ENCODE measurements at regions of chr14 and their contacts with region 1.

Region 1: DNA sequence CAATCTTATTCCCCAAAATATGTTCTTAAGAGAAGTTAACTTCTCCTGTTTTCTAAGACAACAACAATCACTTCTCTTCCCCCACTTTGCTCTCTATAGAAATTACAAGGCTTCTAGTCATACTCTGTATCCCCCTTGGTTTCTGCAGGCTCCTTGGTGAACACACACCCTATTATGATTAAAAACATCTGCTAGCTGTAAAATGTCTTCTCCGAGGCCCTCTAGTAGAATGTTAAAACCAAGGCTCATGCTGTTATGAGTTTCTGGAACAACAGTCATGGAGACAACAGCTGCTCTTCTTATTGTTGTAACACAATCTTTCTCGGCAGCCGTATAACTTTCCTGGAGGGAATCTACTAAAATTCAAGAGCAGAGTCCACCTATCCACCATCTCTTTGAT is 397.5 kb upstream of the CCDC196 start:
- DNase-seq: no peak
- H3K4me3 ChIP-seq: no peak overlapping the region
- H3K27ac ChIP-seq: no peak overlapping the region
- H3K4me1 ChIP-seq: no peaks in the 10 kb centered on the region
- H3K27me3 ChIP-seq: no peaks in the 10 kb centered on the region
- CTCF ChIP-seq: no peak

Region 2: GRCh38 chr14:65751510-65751909 is 337.1 kb before region 1 on chr14:
- CTCF ChIA-PET with region 1: no interaction called
- POLR2A ChIA-PET with region 1: no interaction called
- intact Hi-C with region 1: no loop called
- DNase-seq: no peak
- H3K4me3 ChIP-seq: no peak overlapping the region
- H3K27ac ChIP-seq: no peak overlapping the region
- H3K4me1 ChIP-seq: no peaks in the 10 kb centered on the region
- H3K27me3 ChIP-seq: no peaks in the 10 kb centered on the region
- CTCF ChIP-seq: no peak

Region 3: DNA sequence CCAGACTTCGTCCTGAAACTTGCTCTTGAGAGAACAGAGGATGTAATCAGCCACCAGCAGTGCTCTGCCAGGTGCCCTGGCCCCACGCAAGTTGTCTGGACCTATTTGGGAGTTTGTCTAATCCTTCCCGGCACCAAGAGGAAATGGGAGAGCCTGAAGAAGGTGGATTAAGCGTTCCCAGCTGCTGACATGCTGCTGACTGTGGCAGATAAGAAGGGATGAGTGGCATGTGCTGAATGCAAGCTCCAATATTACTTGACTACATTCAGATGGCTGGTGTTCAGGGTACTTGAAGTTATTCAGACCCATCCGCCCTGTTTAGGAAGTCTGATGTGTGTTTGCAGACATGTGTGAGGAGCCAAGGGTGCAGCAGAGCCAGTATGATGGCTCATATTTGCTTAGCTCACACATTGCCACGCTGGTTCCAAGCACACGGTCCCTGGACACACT is 43.1 kb before region 1 on chr14:
- CTCF ChIA-PET with region 1: no interaction called
- POLR2A ChIA-PET with region 1: no interaction called
- intact Hi-C with region 1: loop called (anchors 2 kb)
- DNase-seq: no peak
- H3K4me3 ChIP-seq: no peak overlapping the region
- H3K27ac ChIP-seq: no peak overlapping the region
- H3K4me1 ChIP-seq: no peaks in the 10 kb centered on the region
- H3K27me3 ChIP-seq: no peaks in the 10 kb centered on the region
- CTCF ChIP-seq: no peak

Measured in PC-9 (cell line).